ENCODE measurements at regions of chr17 and their contacts with region 1.

Region 1: DNA sequence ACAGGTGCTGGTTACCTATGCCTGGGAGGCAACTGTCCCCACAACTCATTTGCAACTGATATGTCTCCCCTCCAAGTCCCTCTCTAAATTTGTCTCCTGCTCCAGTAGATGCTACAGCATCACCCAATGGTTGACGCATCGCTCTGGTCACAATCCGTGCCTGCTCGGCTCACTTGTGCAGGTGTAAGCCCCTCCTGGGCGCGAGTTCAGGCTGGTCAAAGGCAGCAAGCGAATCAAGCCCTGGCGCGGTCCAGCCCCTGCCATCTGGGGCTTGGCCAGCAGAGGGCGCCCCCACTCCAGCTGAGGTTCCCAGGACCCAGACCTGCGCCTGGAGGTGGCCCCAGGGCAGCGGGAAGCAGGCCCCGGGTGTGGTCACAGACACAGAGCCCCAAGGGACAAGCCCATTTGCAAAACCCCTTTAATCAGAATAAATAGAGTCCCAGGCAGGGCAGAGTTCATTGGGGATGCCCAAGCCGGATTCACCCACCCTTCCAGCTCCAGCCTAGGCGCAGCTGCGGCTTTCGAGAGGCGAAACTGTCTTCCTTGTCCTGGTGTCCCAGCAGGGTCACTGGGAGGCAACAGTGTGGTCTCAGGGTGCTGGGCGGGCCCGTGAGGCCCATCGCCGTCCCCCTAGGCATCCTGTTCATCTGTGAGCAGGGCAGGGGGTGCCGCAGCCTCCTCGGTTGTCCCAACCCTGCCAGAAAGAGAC is 15.9 kb downstream of the TMC6 start:
- DNase-seq: peak; percentile 69
- H3K4me3 Mint-ChIP-seq: no peak overlapping the region
- H3K27ac Mint-ChIP-seq: peak overlapping the region; percentile 84
- H3K4me1 Mint-ChIP-seq: peaks cover 33% of the 10 kb centered on the region
- H3K27me3 Mint-ChIP-seq: no peaks in the 10 kb centered on the region

Region 2: GRCh38 chr17:78032166-78032565 is 80.5 kb before region 1 on chr17:
- intact Hi-C with region 1: no loop called
- DNase-seq: no peak
- H3K4me3 Mint-ChIP-seq: no peak overlapping the region
- H3K27ac Mint-ChIP-seq: no peak overlapping the region
- H3K4me1 Mint-ChIP-seq: peaks cover 9% of the 10 kb centered on the region
- H3K27me3 Mint-ChIP-seq: no peaks in the 10 kb centered on the region

Region 3: DNA sequence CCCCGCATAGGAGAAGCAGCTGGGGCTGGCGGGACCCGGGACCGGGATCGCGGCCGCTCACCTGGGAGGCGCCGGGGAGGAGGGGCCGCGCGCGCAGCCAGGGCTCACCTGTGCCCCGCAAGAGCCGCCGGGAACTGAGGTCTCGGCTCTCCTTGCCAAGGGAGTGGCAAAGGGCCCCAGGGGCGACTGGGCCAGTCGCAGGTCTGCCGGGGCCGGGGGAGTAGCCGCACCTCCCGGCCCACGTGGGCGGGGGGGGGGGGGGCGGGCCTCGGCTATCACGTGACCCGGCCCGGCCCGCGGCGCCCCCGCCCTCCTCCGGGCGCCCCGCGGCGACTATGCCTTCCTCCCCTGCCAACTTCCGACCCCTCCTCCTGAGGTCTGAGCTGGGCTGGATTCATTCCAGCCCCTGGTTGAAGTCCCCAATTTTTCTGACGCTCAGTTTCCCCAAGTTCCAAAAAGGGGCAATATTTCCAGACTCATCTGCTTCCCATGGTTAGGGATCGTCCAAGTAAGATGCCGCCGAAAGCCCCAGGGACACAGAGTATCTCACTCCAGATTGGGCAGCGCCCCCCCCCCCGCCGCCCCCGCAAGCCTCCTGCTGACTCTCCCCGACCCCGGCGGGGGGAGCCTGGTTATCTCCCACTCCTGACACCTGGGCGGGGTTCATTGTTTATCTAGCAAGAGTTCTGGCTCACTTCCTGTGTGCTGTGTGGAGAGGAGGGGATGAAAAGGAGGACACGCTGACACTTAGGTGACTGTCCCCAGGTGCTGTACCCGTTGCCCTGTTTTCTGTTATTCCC is 16.1 kb after region 1 on chr17 and contains the start of gene TMC6:
- intact Hi-C with region 1: loop called (anchors 1 kb)
- DNase-seq: peak; percentile 68
- H3K4me3 Mint-ChIP-seq: peak within 1 kb of the TSS; percentile 91
- H3K27ac Mint-ChIP-seq: peak within 1 kb of the TSS; percentile 98
- H3K4me1 Mint-ChIP-seq: peaks cover 37% of the 10 kb centered on the region
- H3K27me3 Mint-ChIP-seq: no peaks in the 10 kb centered on the region
- total RNA-seq, gene TMC6: 240 and 241 TPM in 2 replicates

Region 4: DNA sequence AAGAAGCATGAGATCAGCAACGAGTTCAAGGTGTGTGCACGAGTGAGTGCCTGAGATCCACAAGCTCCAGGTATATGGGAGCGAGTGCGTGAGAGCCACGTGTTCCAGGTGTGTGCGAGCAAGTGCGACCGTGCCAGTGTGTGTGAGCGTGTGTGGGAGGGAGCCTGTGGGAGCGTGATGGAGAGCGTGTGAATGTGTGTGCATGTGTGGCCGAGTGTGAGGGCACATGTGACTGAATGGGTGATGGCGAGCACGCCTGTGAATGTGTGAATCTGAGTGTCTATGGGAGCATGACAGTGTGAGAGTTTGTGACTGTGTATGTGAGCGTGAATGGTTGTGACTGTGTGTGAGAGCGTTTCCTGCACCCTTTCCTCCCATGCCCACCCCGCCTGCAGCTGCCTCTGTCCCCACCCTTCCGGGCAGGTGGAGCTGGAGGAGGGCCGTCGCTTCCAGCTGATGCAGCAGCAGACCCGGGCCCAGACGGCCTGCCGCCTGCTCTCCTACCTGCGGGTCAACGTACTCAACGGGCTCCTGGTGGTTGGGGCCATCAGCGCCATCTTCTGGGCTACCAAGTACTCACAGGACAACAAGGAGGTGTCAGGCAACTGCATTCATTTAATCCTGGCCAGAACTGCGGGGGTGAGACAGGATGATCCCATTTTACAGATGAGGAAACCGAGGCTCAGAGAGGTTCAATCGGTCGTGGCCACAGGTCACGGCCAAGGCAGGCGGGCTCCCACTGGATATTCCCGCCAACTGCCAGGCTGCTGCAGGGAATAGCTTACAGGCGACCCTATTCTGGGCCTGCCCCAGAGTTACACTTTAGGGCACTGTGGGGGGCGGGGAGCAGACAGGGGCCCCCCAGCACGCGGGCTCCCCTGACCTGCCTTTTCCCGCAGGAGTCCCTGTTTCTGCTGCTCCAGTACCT is 21.6 kb after region 1 on chr17:
- intact Hi-C with region 1: loop called (anchors 1 kb)
- DNase-seq: peak; percentile 80
- H3K4me3 Mint-ChIP-seq: peak overlapping the region; percentile 75
- H3K27ac Mint-ChIP-seq: peak overlapping the region; percentile 54
- H3K4me1 Mint-ChIP-seq: peaks cover 57% of the 10 kb centered on the region
- H3K27me3 Mint-ChIP-seq: no peaks in the 10 kb centered on the region

Region 5: DNA sequence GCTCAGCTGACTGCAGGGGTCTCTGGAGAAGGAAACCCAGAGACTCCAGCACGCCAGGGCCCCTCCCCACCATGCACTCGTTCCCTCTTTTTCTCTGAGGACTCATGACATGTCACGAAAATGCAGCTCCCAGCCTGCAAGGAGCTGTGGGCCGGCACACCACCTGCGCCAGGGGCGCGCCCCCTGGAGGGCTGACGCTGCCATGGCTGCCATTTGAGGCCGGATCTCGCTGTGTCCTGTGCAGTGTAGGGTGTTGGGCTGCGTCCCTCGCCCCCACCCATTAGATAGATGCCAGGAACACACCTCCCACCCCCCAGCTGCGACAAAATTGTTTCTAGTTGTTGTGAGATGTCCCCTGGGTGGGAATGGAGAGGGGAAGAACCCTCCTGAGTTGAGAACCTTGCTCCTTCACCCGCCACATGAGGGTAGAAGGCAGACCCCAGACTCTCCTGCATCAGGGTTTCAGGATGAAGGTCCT is 63.9 kb after region 1 on chr17:
- intact Hi-C with region 1: loop called (anchors 2 kb)
- DNase-seq: peak; percentile 72
- H3K4me3 Mint-ChIP-seq: no peak overlapping the region
- H3K27ac Mint-ChIP-seq: no peak overlapping the region
- H3K4me1 Mint-ChIP-seq: peaks cover 38% of the 10 kb centered on the region
- H3K27me3 Mint-ChIP-seq: no peaks in the 10 kb centered on the region